Transverse colon (tissue), 4 donors: ENCODE measurements at regions of chr6 and their contacts with region 1.

Region 1: GRCh38 chr6:1088492-1089001 is 223.4 kb upstream of the FOXQ1 start:
- DNase-seq: peak; percentile 26
- H3K4me3 ChIP-seq: no peak overlapping the region
- H3K27ac ChIP-seq: no peak overlapping the region
- H3K4me1 ChIP-seq: peaks cover 0 to 25% (median 3%) of the 10 kb centered on the region in 4 donors
- H3K27me3 ChIP-seq: no peaks in the 10 kb centered on the region
- CTCF ChIP-seq: no peak
- EP300 ChIP-seq: no peak
- POLR2A ChIP-seq: no peak

Region 2: DNA sequence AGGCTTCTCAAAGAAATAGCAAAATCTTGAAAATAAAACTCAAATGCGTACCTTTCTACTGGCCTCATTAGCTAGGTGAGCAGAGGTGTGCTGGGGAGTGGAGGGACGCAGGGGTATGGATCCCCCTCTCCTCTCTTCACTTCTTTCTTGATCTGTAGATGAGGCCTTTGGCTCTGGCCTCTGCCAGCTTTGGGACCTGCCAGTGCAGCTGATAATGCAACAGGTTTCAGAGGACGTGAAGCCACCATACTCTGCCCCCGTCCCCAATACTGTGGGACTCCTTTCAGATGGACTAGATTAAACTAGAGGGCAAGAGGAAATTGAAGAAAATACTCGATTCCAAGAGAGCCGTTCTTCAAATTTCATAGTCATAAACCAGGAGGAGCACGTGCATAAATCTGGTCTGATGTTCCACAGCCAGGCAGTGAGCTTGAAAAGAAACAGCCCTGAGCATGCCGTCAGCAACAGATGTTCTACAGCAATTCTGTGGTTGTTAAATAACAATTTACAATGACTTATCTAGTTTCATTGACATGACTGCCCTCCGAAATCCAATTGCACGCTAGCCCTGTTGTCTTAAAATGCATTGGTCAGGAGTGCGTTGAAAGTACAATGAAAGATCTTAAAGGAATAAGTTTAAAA is 22.0 kb before region 1 on chr6:
- in situ Hi-C with region 1: no loop called
- intact Hi-C with region 1: loop called (anchors 1 kb)
- DNase-seq: no peak
- H3K4me3 ChIP-seq: no peak overlapping the region
- H3K27ac ChIP-seq: no peak overlapping the region
- H3K4me1 ChIP-seq: peaks cover 0 to 8% (median 4%) of the 10 kb centered on the region in 4 donors
- H3K27me3 ChIP-seq: no peaks in the 10 kb centered on the region
- CTCF ChIP-seq: no peak
- EP300 ChIP-seq: no peak
- POLR2A ChIP-seq: no peak

Region 3: DNA sequence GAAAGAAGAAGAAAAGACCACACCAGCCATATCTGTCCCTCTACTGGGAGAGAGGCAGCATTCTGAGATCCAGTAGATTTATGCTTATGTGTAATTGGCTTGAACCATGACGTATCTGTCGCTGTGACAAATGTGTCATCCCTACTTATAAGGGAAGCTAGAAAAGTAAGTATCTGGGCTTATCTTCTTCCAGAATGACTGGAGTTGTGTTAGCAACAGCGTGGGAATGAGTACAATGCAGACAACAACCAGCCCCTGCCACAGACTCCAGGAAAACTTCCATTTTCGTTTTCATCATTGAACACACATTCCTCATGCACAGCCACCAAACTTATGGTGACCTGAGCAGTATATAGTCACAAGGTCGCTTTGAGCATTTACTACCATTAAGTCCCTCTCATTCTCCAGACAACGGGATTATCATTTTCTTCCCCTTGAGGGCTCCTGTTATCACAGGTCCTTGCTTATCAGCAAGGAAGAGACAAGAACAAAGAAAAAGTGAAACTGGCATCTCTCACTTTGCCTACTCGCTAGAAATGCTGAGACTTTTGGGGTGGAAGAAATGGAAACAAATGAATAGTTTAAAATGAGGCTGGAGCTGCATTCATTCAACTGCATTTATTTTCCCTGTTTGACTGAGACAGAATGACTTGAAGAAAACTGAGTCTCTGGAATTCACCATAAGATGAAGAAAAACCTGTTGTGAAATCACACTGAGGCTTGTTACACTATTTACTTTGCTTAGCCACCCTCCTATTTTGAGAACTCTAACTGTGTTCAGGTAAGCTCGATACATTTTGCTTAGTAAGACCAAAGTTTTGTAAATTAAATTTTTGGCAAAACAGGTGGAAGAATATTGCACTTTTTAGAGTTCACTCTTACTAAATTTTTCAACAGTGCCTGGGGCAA is 74.1 kb after region 1 on chr6:
- in situ Hi-C with region 1: no loop called
- intact Hi-C with region 1: no loop called
- DNase-seq: no peak
- H3K4me3 ChIP-seq: no peak overlapping the region
- H3K27ac ChIP-seq: no peak overlapping the region
- H3K4me1 ChIP-seq: no peaks in the 10 kb centered on the region
- H3K27me3 ChIP-seq: no peaks in the 10 kb centered on the region
- CTCF ChIP-seq: no peak
- EP300 ChIP-seq: no peak
- POLR2A ChIP-seq: no peak

Region 4: DNA sequence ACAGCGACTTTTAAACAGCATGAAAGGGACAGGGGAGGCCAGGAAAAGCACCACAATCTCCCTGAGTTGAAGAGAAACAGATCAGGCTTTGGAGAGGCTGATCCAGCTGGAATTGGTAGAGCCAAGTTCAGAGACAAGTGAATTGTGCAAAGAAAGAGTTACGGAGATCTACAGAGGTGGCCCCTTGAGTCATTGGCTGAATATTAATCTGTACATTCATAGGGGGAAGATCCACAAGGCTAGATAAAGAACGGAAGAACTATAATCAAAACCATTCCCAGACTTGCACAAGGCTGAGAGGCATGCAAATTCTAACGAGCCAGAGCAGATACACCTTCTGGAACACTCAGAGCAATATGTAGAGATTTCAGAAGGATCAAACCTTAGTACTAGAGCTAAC is 209.2 kb after region 1 on chr6:
- in situ Hi-C with region 1: no loop called
- intact Hi-C with region 1: no loop called
- DNase-seq: no peak
- H3K4me3 ChIP-seq: no peak overlapping the region
- H3K27ac ChIP-seq: no peak overlapping the region
- H3K4me1 ChIP-seq: no peaks in the 10 kb centered on the region
- H3K27me3 ChIP-seq: peaks cover 4% of the 10 kb centered on the region
- CTCF ChIP-seq: no peak
- EP300 ChIP-seq: no peak
- POLR2A ChIP-seq: no peak